Posterior cingulate gyrus (tissue), 11 donors: ENCODE measurements at regions of chr6 and their contacts with region 1.

Region 1: GRCh38 chr6:80094017-80094416 is 12.5 kb upstream of the BCKDHB start:
- DNase-seq: no peak

Region 2: GRCh38 chr6:79869600-79870084 is 224.4 kb before region 1 on chr6:
- intact Hi-C with region 1: loop called (anchors 5 kb)
- DNase-seq: peak; percentile 68 to 97 (median 77)

Region 3: DNA sequence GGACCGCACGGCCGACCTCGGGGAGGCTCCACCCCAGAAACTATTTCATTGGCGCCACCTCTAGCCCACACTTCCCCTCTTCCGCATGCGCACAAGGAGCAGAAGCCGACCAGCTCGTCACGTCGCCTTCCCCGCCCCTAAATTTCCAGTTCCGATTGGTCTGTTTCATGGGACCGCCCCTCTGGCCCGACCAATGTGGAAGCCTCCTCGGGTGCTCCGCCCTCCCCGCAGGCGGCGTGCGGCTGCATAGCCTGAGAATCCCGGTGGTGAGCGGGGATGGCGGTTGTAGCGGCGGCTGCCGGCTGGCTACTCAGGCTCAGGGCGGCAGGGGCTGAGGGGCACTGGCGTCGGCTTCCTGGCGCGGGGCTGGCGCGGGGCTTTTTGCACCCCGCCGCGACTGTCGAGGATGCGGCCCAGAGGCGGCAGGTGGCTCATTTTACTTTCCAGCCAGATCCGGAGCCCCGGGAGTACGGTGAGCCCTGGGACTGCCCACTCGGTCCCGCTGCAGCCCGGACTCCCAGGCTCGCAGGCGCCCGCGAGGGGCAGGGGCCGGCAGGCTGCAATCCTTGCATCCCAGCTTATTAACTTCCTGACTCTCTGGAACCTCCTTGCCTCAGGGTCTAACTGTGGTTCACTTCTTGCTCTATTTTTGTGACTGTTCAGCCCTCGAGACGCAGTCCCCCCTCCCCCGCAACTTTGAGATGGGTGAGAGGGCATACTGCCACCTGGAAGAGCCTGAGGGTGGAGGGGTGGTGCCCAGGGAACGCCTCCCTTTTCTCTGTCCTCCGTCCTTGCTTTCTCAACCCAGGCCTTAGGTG is 12.6 kb after region 1 on chr6 and contains the start of gene BCKDHB:
- intact Hi-C with region 1: no loop called
- DNase-seq: peak; percentile 97 to 100 (median 98)

Region 4: GRCh38 chr6:80348263-80348662 is 254.2 kb after region 1 on chr6:
- intact Hi-C with region 1: no loop called
- DNase-seq: no peak